SK-N-SH (cell line): ENCODE measurements at regions of chr15 and their contacts with region 1.

Region 1: DNA sequence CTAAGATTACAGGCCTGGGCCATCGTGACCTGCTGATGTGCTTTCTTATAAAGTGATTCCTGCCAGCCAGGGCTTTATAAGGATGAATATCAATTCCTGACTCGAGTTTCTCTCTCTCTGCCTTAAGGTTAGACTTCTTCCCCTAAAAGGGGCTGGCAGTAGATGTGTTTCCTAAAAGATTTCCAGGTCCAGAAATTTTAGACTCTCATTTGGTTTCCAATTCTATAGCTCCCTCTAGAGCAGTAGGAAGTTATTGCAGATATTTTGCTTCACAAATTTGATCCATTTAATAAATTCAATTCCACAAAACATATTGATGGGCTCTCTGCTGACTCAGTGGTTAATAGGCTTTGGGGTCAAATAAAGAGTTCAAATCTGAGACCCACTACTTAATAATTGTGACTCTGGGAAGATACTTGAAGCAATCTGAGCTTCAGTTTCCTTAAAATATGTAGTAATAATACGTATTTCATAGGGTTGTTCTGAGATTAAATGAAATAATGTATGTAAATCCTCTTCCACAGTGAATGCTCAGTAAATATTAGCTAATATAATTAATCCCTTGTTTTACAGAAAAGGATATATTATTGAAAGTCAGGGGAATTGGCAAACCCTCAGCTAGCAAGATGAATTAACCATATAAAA is 2.1 kb downstream of the TRIM69 start:
- DNase-seq: peak; percentile 56
- H3K4me3 ChIP-seq: no peak overlapping the region
- H3K27ac ChIP-seq: no peak overlapping the region
- H3K4me1 ChIP-seq: peaks cover 4 to 8% of the 10 kb centered on the region in 2 experiments; a peak in 2 of 4 replicates
- H3K27me3 ChIP-seq: no peaks in the 10 kb centered on the region
- CTCF ChIP-seq: peak; percentile 86
- EP300 ChIP-seq: no peak
- RAD21 ChIP-seq: peak; percentile 87

Region 2: DNA sequence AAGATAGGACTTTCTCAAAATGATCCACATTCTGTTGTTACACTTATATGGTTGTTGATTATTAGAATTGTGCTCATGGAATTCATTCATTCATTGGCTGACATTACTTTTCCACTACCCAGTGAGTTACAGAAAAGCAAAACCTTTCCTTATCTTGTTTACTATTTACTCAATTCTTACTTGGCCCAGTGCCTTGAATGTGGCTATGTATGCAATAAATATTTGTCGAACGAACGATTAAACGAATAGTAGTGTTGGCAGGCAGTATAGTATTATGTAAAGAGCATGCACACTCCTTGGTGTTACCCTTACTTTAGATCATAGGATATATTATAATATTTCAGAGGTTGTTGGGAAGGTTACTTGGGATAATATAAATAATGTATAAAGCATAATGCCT is 280.0 kb before region 1 on chr15:
- CTCF ChIA-PET with region 1: no interaction called
- POLR2A ChIA-PET with region 1: no interaction called
- DNase-seq: no peak
- H3K4me3 ChIP-seq: no peak overlapping the region
- H3K27ac ChIP-seq: no peak overlapping the region
- H3K4me1 ChIP-seq: no peaks in the 10 kb centered on the region
- H3K27me3 ChIP-seq: no peaks in the 10 kb centered on the region
- CTCF ChIP-seq: no peak
- EP300 ChIP-seq: no peak
- RAD21 ChIP-seq: no peak

Region 3: GRCh38 chr15:44545913-44546802 is 192.3 kb before region 1 on chr15:
- CTCF ChIA-PET with region 1: no interaction called
- POLR2A ChIA-PET with region 1: no interaction called
- DNase-seq: peak; percentile 66
- H3K4me3 ChIP-seq: no peak overlapping the region; a peak in 1 of 4 replicates
- H3K27ac ChIP-seq: peak overlapping the region; percentile 63 to 82
- H3K4me1 ChIP-seq: peaks cover 19 to 27% of the 10 kb centered on the region in 2 experiments
- H3K27me3 ChIP-seq: no peaks in the 10 kb centered on the region
- CTCF ChIP-seq: peak; percentile 59
- EP300 ChIP-seq: peak in 1 of 2 experiments; percentile 88; a peak in 2 of 4 replicates
- RAD21 ChIP-seq: no peak; the same call in 1 of the 2 replicates

Region 4: DNA sequence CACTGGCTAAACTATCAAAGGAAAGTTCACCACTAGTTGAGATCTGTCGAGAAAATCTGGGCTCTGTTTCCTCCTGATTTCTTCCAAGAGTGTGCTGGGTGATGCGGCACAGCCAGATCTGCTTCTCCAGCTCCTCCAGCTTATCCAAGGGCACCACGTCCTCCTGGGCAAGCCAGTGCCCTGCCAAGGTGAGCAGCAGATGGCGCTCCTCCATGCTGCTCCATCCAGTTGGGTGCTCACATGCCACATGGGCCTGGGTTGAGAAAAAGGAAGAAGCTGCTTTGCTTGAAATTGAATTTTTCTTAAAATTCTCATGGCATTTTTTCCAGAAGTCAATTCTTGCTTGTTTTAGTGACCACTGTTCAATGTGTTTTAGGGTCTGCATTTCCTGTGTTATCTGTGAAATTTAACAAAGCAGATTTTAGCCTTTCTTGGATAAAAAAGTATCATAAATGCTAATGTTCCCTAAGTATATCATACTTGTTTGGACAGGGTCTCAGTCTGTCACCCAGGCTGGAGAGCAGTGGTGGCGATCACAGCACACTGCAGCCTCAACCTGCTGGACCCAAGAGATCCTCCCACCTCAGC is 154.2 kb before region 1 on chr15:
- CTCF ChIA-PET with region 1: interaction called, 42 read pairs
- POLR2A ChIA-PET with region 1: interaction called, 3 read pairs
- DNase-seq: peak; percentile 43
- H3K4me3 ChIP-seq: no peak overlapping the region
- H3K27ac ChIP-seq: no peak overlapping the region
- H3K4me1 ChIP-seq: no peaks in the 10 kb centered on the region
- H3K27me3 ChIP-seq: no peaks in the 10 kb centered on the region
- CTCF ChIP-seq: peak; percentile 56
- EP300 ChIP-seq: no peak
- RAD21 ChIP-seq: peak; percentile 24; the same call in 1 of the 2 replicates

Region 5: DNA sequence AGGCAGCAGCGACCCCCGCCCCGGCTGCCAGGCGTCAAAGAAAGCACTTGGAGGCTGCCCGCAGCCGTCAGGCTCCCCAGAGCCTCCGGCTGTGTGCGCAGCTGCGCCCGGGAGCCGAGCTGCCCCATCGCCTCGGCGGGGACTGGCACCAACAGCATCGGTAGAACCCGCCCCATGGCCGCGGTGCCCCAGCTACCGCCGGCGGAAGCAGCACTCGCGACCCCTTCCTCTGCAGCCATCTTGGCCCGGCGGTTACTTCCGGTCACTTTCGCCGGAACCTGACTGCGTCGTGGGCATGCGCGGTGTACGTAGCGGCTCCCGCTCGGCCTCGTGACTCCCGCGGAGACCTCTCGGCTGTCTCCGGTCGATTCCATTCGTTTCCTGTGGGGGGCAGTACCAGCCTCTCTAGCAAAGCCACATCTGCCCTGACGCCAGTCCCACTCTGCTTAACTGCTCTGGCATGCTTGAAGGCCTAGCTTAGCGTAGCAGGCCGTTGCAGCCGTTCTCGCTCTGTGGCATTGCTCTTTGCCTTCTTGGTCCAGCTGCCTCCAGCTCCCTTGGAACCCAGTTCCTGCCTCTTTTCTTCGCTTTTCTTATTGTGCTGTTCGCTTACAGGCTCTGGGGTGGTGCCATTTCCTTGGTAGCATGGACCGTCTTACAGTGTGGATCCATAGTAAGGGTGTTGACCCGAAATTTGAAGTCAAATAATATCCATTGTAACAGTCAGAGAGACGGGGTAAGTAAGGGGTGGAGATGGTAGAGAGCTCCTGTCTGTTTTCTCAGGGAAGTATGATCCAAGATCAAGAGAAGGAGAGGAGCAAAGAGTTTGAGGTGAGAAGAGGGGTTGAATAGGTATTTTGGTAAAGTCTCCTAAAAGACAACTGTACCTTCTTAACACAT is 74.8 kb before region 1 on chr15 and contains the start of gene SPG11:
- CTCF ChIA-PET with region 1: interaction called, 66 read pairs
- POLR2A ChIA-PET with region 1: interaction called, 12 read pairs
- DNase-seq: peak; percentile 94
- H3K4me3 ChIP-seq: peak within 1 kb of the TSS; percentile 90 to 95
- H3K27ac ChIP-seq: peak within 1 kb of the TSS; percentile 84 to 93
- H3K4me1 ChIP-seq: peaks cover 7% of the 10 kb centered on the region in 2 experiments; a peak in 3 of 4 replicates
- H3K27me3 ChIP-seq: no peaks in the 10 kb centered on the region
- CTCF ChIP-seq: peak; percentile 84
- EP300 ChIP-seq: peak in 1 of 2 experiments; percentile 23; a peak in 1 of 4 replicates
- RAD21 ChIP-seq: peak; percentile 88
- polyA plus RNA-seq, gene SPG11: 36.3 and 48.7 TPM in 2 replicates

Region 6: DNA sequence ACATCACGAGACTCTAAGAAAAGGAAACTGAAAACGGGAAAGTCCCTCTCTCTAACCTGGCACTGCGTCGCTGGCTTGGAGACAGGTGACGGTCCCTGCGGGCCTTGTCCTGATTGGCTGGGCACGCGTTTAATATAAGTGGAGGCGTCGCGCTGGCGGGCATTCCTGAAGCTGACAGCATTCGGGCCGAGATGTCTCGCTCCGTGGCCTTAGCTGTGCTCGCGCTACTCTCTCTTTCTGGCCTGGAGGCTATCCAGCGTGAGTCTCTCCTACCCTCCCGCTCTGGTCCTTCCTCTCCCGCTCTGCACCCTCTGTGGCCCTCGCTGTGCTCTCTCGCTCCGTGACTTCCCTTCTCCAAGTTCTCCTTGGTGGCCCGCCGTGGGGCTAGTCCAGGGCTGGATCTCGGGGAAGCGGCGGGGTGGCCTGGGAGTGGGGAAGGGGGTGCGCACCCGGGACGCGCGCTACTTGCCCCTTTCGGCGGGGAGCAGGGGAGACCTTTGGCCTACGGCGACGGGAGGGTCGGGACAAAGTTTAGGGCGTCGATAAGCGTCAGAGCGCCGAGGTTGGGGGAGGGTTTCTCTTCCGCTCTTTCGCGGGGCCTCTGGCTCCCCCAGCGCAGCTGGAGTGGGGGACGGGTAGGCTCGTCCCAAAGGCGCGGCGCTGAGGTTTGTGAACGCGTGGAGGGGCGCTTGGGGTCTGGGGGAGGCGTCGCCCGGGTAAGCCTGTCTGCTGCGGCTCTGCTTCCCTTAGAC is 26.9 kb before region 1 on chr15 and contains the start of gene B2M:
- CTCF ChIA-PET with region 1: interaction called, 117 read pairs
- POLR2A ChIA-PET with region 1: interaction called, 6 read pairs
- DNase-seq: peak; percentile 93
- H3K4me3 ChIP-seq: peak within 1 kb of the TSS; percentile 74 to 99
- H3K27ac ChIP-seq: peak within 1 kb of the TSS; percentile 88 to 89
- H3K4me1 ChIP-seq: no peaks in the 10 kb centered on the region; a peak in 1 of 4 replicates
- H3K27me3 ChIP-seq: no peaks in the 10 kb centered on the region
- CTCF ChIP-seq: no peak
- EP300 ChIP-seq: no peak
- RAD21 ChIP-seq: no peak
- polyA plus RNA-seq, gene B2M: 1,193 and 2,153 TPM in 2 replicates

Region 7: GRCh38 chr15:44719293-44719999 is 19.0 kb before region 1 on chr15:
- CTCF ChIA-PET with region 1: interaction called, 117 read pairs
- POLR2A ChIA-PET with region 1: no interaction called
- DNase-seq: no peak
- H3K4me3 ChIP-seq: no peak overlapping the region
- H3K27ac ChIP-seq: no peak overlapping the region
- H3K4me1 ChIP-seq: no peaks in the 10 kb centered on the region; a peak in 1 of 4 replicates
- H3K27me3 ChIP-seq: no peaks in the 10 kb centered on the region
- CTCF ChIP-seq: no peak
- EP300 ChIP-seq: no peak
- RAD21 ChIP-seq: no peak

Region 8: GRCh38 chr15:44753345-44753744 is 14.9 kb after region 1 on chr15:
- CTCF ChIA-PET with region 1: interaction called, 16 read pairs
- POLR2A ChIA-PET with region 1: no interaction called
- DNase-seq: no peak
- H3K4me3 ChIP-seq: no peak overlapping the region
- H3K27ac ChIP-seq: no peak overlapping the region
- H3K4me1 ChIP-seq: no peaks in the 10 kb centered on the region
- H3K27me3 ChIP-seq: no peaks in the 10 kb centered on the region
- CTCF ChIP-seq: no peak
- EP300 ChIP-seq: no peak
- RAD21 ChIP-seq: no peak

Region 9: DNA sequence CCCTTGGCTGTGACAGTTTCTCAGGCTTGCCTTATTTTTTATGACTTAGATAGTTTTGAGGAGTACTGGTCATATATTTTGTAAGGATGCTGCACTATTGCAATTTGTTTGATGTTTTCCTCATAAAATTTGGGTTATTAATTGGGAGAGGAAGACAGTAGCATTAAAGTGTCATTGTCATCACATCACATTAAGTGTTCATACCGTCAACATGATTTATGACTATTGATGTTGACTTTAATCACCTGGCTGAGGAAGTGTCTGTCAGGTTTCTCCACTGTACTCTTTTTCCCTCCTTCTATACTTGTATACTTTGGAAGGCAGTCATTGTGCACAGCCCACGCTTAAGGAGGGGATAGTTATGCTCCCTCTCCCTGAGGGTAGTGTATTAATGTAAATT is 24.7 kb after region 1 on chr15:
- CTCF ChIA-PET with region 1: interaction called, 13 read pairs
- POLR2A ChIA-PET with region 1: no interaction called
- DNase-seq: no peak
- H3K4me3 ChIP-seq: no peak overlapping the region
- H3K27ac ChIP-seq: no peak overlapping the region
- H3K4me1 ChIP-seq: no peaks in the 10 kb centered on the region
- H3K27me3 ChIP-seq: no peaks in the 10 kb centered on the region; the same call in 1 of the 2 replicates
- CTCF ChIP-seq: no peak
- EP300 ChIP-seq: no peak
- RAD21 ChIP-seq: no peak